ENCODE measurements at regions of chr11 and their contacts with region 1.

Region 1: DNA sequence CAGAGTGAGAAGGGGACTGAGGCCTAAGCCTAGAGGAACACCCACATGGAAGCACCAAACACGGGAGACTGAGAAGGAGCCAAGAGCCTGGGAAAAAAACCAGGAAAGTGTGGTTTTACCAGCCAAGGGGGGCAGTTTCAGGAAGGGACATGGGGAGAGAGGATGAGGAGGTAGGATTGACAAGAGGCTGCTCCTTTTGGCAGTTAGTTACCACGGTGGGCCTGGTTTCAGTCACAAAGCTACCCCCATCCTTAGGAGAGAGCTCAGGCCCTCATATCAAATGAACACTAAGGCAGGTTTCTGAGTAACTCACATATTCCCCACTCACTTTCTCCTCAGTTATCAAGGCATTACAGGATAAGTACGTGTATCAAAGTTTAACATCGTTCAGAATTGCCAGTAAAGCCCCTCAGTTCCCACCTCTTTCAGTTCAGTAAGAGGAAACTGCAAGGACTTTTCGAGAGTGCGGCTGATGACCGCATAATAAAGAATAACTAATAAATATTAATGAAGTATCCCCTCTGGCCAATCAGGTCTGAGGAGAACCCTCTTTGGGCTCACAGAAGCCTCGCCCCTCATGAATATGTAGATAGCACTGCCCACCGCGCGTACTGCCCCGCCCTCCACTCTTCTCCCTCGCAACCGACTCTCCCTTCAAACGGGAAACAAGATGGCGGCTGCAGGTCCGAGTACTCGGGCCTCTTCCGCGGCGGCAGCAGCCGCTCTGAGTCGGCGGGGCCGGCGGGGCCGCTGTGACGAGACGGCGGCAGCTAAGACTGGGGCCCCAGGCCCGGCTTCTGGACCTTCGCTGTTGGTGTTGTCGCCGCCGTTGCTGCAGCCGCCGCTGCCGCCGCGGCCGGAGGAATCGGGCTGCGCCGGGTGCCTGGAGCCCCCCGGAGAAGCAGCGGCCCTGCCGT is at the start of gene RNF169:
- DNase-seq: peak; percentile 93 to 95
- ATAC-seq: peak; percentile 96
- total RNA-seq, gene RNF169: 11.2 to 12.6 TPM

Region 2: DNA sequence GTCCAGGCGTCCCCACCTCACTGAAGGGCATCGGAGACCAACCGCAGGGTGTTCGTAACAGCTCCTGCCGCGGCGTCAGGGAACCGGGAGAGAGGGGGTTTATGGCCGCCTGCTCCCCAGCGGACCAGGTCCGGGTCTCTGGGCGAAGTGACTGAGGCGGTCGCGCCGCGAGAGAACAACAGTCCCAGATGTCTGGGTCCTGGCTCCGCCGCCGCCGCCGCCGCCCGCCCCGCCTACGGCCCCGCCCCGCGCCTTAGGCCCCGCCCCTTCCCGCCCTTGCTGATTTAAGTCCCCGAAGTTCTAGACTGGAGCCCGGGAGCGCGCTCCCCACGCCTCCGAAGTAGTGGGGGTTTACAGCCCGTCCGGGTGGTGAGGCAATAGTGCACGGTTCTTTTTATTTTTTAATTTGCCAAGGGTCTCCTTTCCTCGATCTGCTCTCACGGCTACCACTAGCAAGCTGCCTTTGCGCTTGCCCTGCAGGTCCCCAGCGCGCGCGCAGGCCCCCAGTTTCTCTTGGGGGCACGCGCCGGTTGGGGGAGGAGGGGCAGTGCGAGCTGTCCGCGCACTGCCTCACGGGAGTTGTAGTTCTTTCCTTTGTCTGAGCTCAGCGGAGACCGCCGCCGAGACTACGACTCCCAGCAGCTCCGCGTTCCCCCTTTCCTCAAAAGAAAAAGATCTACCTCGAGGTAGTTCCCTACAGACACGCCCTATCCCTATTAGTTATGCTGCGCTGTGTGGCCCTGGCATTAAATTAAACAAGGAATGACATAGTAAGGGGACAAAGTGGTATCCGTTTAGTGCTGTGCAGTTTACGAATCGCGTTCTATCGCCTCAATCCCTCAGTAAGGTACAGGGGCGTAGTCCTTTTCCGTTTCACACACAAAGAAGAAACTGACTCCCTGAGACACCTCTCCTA is 350.0 kb before region 1 on chr11 and contains the start of gene PGM2L1:
- intact Hi-C with region 1: loop called in 1 of 2 experiments (anchors 10 kb)
- DNase-seq: peak; percentile 95 to 97
- ATAC-seq: peak; percentile 90
- total RNA-seq, gene PGM2L1: 9.9 to 14.3 TPM

Region 3: GRCh38 chr11:74466916-74467885 is 281.3 kb before region 1 on chr11 and contains the start of gene KCNE3:
- intact Hi-C with region 1: loop called in 1 of 2 experiments (anchors 10 kb)
- DNase-seq: peak; percentile 67 to 71
- ATAC-seq: peak; percentile 74
- total RNA-seq, gene KCNE3: 18.8 to 37.7 TPM

Measured in left colon (tissue), 2 donors.